ENCODE measurements at regions of chr12 and their contacts with region 1.

Region 1: GRCh38 chr12:80129895-80130530 is 30.7 kb downstream of the OTOGL start:
- DNase-seq: no peak
- ATAC-seq: no peak
- H3K4me3 Mint-ChIP-seq: no peak overlapping the region
- H3K27ac Mint-ChIP-seq: no peak overlapping the region
- H3K4me1 Mint-ChIP-seq: no peaks in the 10 kb centered on the region
- H3K27me3 Mint-ChIP-seq: peaks cover 5% of the 10 kb centered on the region

Region 2: DNA sequence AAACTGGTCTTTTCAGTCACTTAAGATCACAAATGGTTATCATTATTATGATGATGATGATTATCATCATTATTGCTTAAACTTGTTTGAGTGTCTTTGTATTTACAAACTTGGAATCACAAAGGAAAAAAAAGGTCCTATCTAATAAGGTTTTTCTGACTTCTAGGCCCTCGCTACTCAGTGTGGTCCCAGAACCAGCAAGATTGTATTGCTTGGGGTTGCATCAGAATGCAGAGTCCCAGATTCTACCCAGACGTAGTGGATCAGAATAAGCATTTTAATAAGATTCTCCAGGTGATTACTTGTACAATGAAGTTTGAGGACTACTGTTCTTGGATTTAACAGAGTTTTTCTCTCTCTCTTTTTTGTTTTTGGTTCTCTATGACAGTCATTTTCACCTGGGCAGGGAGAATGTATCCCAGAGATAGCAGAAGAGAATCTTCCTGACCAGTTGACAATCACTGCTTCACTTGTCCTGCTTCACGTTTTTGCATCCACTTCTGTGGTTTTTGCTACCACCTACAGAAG is 165.8 kb before region 1 on chr12:
- CTCF ChIA-PET with region 1: no interaction called
- POLR2A ChIA-PET with region 1: no interaction called
- intact Hi-C with region 1: no loop called
- DNase-seq: no peak
- ATAC-seq: no peak
- H3K4me3 Mint-ChIP-seq: no peak overlapping the region
- H3K27ac Mint-ChIP-seq: no peak overlapping the region
- H3K4me1 Mint-ChIP-seq: no peaks in the 10 kb centered on the region
- H3K27me3 Mint-ChIP-seq: peaks cover 12% of the 10 kb centered on the region

Region 3: GRCh38 chr12:80241576-80242273 is 111.7 kb after region 1 on chr12:
- CTCF ChIA-PET with region 1: no interaction called
- POLR2A ChIA-PET with region 1: no interaction called
- intact Hi-C with region 1: no loop called
- DNase-seq: no peak
- ATAC-seq: no peak
- H3K4me3 Mint-ChIP-seq: no peak overlapping the region
- H3K27ac Mint-ChIP-seq: no peak overlapping the region
- H3K4me1 Mint-ChIP-seq: no peaks in the 10 kb centered on the region
- H3K27me3 Mint-ChIP-seq: no peaks in the 10 kb centered on the region

Region 4: DNA sequence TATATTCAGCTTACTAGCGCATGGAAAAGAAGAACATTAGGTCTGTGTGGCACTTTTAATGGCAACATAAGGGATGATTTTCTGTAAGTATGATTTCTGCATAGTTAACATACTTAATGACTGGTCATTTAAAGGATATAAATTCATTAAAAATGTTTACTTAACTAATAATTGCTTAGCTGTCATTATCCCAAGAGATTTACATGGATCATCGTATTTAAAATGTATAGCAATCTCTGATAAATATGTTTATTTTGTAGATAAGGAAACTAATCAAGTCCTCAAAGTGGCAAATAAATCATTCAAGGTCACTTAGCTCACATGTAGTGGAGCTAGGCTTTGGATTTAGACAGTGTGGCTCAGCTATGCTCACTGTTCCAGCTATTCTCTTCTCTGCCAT is 127.9 kb after region 1 on chr12:
- CTCF ChIA-PET with region 1: no interaction called
- POLR2A ChIA-PET with region 1: interaction called, 11 read pairs
- intact Hi-C with region 1: no loop called
- DNase-seq: no peak
- ATAC-seq: no peak
- H3K4me3 Mint-ChIP-seq: no peak overlapping the region
- H3K27ac Mint-ChIP-seq: no peak overlapping the region
- H3K4me1 Mint-ChIP-seq: no peaks in the 10 kb centered on the region
- H3K27me3 Mint-ChIP-seq: peaks cover 6% of the 10 kb centered on the region